ENCODE measurements at regions of chr7 and their contacts with region 1.

Region 1: DNA sequence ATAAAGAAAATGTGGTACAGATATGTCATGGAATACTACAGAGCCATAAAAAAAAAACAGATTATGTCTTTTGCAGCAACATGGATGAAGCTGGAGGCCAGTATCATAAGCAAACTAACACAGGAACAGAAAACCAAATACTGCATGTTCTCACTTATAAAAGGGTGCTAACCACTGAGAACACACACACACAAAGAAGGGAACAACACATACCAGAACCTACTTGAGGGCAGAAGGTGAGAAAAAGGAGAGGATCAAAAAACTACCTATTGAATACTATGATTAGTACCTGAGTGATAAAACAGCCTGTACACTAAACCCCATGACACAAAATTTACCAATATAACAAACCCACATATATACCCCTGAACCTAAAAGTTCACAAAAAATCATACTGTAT is 144.6 kb downstream of the TPK1 start:
- DNase-seq: no peak
- H3K4me3 ChIP-seq: no peak overlapping the region
- H3K27ac ChIP-seq: no peak overlapping the region
- H3K4me1 ChIP-seq: no peaks in the 10 kb centered on the region
- H3K27me3 ChIP-seq: no peaks in the 10 kb centered on the region
- CTCF ChIP-seq: no peak
- POLR2A ChIP-seq: no peak

Region 2: GRCh38 chr7:144641389-144642044 is 49.7 kb before region 1 on chr7:
- CTCF ChIA-PET with region 1: no interaction called
- POLR2A ChIA-PET with region 1: no interaction called
- dilution Hi-C with region 1: no loop called
- intact Hi-C with region 1: loop called (anchors 1 kb)
- DNase-seq: no peak
- H3K4me3 ChIP-seq: no peak overlapping the region
- H3K27ac ChIP-seq: no peak overlapping the region
- H3K4me1 ChIP-seq: no peaks in the 10 kb centered on the region
- H3K27me3 ChIP-seq: no peaks in the 10 kb centered on the region
- CTCF ChIP-seq: no peak
- POLR2A ChIP-seq: no peak

Region 3: GRCh38 chr7:144747936-144748335 is 56.7 kb after region 1 on chr7:
- CTCF ChIA-PET with region 1: no interaction called
- POLR2A ChIA-PET with region 1: no interaction called
- dilution Hi-C with region 1: no loop called
- intact Hi-C with region 1: no loop called
- DNase-seq: no peak
- H3K4me3 ChIP-seq: no peak overlapping the region
- H3K27ac ChIP-seq: no peak overlapping the region
- H3K4me1 ChIP-seq: no peaks in the 10 kb centered on the region
- H3K27me3 ChIP-seq: no peaks in the 10 kb centered on the region
- CTCF ChIP-seq: no peak
- POLR2A ChIP-seq: no peak

Measured in endothelial cell of umbilical vein (primary cell).